Cardiac septum (tissue), 1 donor: ENCODE measurements at regions of chr1 and their contacts with region 1.

Region 1: GRCh38 chr1:26321315-26322041 is 3.7 kb downstream of the CD52 start:
- DNase-seq: peak; percentile 96

Region 2: GRCh38 chr1:26111530-26112406 is 209.7 kb before region 1 on chr1 and contains the start of gene PDIK1L:
- intact Hi-C with region 1: loop called (anchors 5 kb)
- DNase-seq: peak; percentile 97
- total RNA-seq, gene PDIK1L: 3.5 TPM

Region 3: GRCh38 chr1:26169669-26170471 is 151.6 kb before region 1 on chr1 and contains the start of gene ZNF593:
- intact Hi-C with region 1: loop called (anchors 5 kb)
- DNase-seq: peak; percentile 96
- total RNA-seq, gene ZNF593: 23.2 TPM

Region 4: DNA sequence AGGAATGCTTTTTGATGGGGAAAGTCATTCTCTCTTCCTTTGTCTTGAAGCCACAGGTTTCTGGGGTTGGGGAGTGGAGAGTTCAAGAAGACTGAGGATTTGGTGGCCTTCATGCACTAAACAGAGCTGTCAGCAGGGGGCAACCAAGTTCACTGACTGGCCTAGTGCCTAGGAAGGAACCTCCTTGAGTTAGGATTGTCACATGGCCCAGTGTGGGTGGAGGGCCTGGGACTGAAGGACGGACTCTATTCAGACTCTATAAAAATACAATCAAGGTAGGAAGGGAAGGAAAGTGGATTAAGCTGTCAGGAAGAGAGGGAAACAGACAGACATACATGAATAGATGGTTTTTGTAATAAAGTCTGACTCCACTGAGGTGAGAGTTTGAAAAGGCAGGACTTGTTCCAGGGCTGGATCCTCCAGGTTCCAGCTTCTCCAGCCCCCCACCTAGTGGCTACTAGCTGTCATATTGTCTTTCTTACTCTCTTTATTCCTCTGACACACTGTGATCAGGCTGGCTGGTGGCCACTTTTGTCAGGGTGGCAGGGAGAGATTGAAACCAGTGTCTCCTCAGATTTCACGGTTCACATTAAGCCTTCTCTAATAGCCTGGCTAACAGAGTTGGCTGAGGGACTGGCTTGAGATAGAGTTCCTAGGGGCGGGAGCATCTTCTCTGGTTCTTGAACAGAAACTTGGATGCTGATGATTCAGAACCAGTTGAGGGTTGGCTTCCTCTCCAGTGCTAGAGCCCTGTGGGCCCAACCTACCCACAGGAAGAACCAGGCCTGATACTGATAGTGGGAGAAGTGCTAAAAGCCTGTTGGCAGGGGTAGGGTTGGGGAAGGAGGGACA is 45.7 kb before region 1 on chr1:
- intact Hi-C with region 1: loop called (anchors 1 kb)
- DNase-seq: peak; percentile 91

Region 5: DNA sequence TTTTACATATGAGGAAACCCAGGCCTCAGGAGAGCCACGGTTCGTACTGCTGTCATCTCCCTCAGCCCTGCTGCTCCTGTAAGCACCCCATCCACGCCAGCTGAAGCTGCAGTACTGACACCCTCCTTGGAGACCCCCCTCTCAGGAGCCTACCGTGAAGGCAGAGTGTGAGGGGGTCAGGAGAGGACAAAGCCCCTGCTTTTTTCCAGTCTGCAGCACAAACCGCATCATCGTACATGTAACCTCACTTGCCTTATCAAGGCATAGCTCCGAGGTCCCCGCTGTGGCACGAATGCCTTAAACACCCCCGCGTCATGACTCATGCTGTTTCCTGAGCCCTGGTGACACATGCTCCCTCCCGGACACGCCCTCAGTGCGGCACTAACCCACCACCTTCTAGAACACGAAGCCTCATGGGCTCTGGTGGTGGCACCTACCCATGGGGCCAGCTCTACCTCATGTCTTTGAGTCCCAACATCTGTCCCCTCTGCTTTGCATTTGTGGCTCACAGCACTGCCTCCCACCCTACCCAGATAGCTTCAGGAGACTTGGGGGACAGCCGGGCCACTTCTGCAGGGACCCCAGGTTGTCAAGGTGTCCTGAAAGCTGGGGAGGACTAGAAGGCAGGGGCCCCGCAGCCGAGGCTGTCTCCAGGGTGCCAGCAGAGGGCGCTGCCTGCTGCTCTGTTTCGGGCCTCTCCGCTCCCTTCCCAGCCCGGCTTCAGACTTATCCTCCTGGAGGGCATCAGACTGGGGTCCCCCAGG is 36.7 kb before region 1 on chr1:
- intact Hi-C with region 1: loop called (anchors 1 kb)
- DNase-seq: peak; percentile 87